PC-3 (cell line): ENCODE measurements at regions of chr2 and their contacts with region 1.

Region 1: DNA sequence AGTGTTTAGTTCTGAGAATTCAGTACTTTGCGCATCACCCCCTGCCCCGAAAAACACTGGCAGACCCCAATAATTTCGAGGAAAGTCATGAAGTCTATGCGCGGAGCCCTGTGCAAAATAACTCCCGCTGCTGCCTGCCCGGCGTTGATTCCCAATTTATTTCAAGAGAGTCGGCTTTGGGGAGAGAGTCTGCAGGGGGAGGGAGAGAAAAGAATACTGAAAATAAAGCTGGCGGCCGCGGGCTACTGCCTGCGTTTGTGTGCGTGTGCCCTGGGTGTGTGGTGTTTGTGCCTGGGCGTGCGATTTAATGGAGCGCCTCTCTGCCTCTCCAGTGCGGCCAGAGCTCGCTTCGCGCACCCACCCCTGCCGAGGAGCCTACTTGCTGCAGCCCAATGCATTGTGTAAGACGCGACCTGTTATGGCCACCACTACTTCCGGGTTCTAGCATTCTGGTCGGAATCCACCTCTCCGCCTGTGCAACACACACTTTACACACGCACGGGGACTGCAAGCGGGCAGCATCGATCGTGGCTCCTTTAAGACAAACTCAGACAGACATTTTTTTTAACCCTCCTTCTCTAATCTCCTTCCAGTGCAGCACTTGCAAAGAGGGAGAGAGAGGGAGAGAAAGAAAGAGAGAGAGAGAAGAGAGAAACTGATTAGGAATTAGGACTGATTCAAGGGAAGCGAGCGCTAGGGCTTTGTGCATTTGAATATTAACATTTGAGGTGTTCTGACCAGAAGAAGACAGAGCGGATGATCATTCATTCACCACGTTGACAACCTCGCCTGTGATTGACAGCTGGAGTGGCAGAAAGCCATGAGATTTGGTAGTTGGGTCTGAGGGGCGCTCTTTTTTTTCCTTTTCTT is at the start of gene MEIS1:
- DNase-seq: peak; percentile 90
- ATAC-seq: peak; percentile 77
- H3K4me3 ChIP-seq: peak within 1 kb of the TSS; percentile 91
- H3K27ac ChIP-seq: peak within 1 kb of the TSS; percentile 55
- H3K4me1 ChIP-seq: no peaks in the 10 kb centered on the region
- H3K27me3 ChIP-seq: no peaks in the 10 kb centered on the region
- CTCF ChIP-seq: no peak
- total RNA-seq, gene MEIS1: 4.1 and 5.9 TPM in 2 replicates

Region 2: DNA sequence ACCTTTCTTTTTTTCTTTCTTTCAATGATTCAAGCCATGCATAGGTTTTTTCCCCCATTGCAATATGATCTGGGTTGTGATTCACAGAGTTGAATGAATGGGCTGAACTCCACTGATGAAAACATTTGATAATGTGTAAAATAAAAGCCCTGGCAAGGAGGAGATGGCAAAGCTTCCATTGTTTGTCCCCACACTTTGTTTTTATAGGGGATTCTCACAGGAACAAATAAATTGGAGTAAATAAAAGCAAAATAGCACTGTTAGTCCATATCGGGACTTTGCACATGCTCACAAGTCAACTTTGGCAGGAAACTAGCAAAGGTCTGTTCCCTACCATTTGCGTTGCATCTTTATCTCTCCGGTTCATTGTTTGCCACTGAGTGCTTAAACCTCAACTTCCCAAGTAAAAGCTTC is 55.7 kb after region 1 on chr2:
- CTCF ChIA-PET with region 1: no interaction called
- POLR2A ChIA-PET with region 1: no interaction called
- intact Hi-C with region 1: loop called (anchors 1 kb)
- DNase-seq: peak; percentile 85
- ATAC-seq: peak; percentile 88
- H3K4me3 ChIP-seq: peak overlapping the region; percentile 22
- H3K27ac ChIP-seq: peak overlapping the region; percentile 81
- H3K4me1 ChIP-seq: peaks cover 34% of the 10 kb centered on the region
- H3K27me3 ChIP-seq: no peaks in the 10 kb centered on the region
- CTCF ChIP-seq: no peak

Region 3: GRCh38 chr2:67215214-67216055 is 780.5 kb after region 1 on chr2:
- CTCF ChIA-PET with region 1: no interaction called
- POLR2A ChIA-PET with region 1: no interaction called
- intact Hi-C with region 1: loop called (anchors 10 kb)
- DNase-seq: peak; percentile 74
- ATAC-seq: peak; percentile 85
- H3K4me3 ChIP-seq: no peak overlapping the region
- H3K27ac ChIP-seq: no peak overlapping the region
- H3K4me1 ChIP-seq: no peaks in the 10 kb centered on the region
- H3K27me3 ChIP-seq: no peaks in the 10 kb centered on the region
- CTCF ChIP-seq: peak; percentile 84

Region 4: DNA sequence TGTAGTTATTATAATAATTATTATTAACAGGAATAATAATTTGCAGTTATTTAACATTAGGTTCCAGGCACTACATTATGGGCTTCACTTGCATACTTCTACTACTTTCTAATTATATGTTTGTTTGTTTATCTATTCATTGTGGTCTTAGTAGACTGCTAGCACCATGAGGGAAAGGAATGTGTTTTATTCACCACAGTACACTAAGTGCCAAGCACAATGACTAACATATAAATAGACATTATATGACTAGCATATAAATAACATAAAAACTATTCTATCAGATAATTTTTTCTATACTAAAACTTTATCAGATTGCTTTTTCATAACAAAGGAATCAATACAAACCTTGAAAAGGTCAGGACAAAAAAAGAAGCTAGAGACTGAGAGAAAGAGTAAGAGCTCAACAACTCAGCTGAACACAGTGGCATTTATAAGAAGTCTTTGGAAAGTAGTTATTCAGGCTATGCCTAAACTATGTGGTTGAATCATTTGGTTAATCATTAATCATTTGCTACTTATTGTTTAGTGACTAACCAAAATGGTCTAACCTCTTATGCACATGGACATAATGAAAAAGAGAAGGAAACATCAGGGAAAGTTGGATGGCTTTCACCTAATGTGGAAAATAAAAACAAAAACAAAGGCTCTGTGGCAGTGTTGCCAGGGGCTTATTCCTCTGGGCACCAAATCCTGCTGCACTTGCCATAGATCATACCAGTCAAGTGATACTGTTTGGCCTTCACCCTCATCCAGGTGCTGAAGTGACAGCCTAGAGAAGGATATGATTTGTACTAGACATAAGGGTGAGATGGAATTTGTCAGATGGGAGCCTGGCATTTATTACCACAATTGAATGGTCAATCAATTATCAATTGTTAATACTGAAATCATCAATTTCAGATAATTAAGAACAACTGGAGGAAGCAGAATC is 1137.1 kb after region 1 on chr2:
- CTCF ChIA-PET with region 1: no interaction called
- POLR2A ChIA-PET with region 1: no interaction called
- intact Hi-C with region 1: loop called (anchors 5 kb)
- DNase-seq: peak; percentile 94
- ATAC-seq: peak; percentile 53
- H3K4me3 ChIP-seq: no peak overlapping the region
- H3K27ac ChIP-seq: peak overlapping the region; percentile 86
- H3K4me1 ChIP-seq: peaks cover 46% of the 10 kb centered on the region
- H3K27me3 ChIP-seq: no peaks in the 10 kb centered on the region
- CTCF ChIP-seq: no peak